Heart left ventricle (tissue), 16 donors: ENCODE measurements at regions of chr2 and their contacts with region 1.

Region 1: GRCh38 chr2:27271631-27272340 is 3.4 kb upstream of the DNAJC5G start:
- DNase-seq: peak in 3 of 5 donors; percentile 64 to 69 (median 66)
- ATAC-seq: peak; percentile 87 to 95 (median 93)
- H3K4me3 ChIP-seq: no peak overlapping the region
- H3K27ac ChIP-seq: peak overlapping the region; percentile 62 to 91 (median 77)
- H3K4me1 ChIP-seq: peaks cover 0 to 38% (median 5%) of the 10 kb centered on the region in 12 donors
- H3K27me3 ChIP-seq: peaks cover 0 to 11% (median 0%) of the 10 kb centered on the region in 9 donors
- CTCF ChIP-seq: no peak
- POLR2A ChIP-seq: peak in 1 of 2 donors; percentile 32

Region 2: GRCh38 chr2:26959331-26959730 is 312.5 kb before region 1 on chr2:
- intact Hi-C with region 1: loop called in 2 of 10 experiments (anchors 10 kb)
- DNase-seq: no peak
- ATAC-seq: peak in 1 of 4 donors; percentile 44
- H3K4me3 ChIP-seq: no peak overlapping the region
- H3K27ac ChIP-seq: no peak overlapping the region
- H3K4me1 ChIP-seq: peaks cover 0 to 7% (median 0%) of the 10 kb centered on the region in 12 donors
- H3K27me3 ChIP-seq: peaks cover 0 to 46% (median 7%) of the 10 kb centered on the region in 9 donors
- CTCF ChIP-seq: no peak
- POLR2A ChIP-seq: no peak

Region 3: DNA sequence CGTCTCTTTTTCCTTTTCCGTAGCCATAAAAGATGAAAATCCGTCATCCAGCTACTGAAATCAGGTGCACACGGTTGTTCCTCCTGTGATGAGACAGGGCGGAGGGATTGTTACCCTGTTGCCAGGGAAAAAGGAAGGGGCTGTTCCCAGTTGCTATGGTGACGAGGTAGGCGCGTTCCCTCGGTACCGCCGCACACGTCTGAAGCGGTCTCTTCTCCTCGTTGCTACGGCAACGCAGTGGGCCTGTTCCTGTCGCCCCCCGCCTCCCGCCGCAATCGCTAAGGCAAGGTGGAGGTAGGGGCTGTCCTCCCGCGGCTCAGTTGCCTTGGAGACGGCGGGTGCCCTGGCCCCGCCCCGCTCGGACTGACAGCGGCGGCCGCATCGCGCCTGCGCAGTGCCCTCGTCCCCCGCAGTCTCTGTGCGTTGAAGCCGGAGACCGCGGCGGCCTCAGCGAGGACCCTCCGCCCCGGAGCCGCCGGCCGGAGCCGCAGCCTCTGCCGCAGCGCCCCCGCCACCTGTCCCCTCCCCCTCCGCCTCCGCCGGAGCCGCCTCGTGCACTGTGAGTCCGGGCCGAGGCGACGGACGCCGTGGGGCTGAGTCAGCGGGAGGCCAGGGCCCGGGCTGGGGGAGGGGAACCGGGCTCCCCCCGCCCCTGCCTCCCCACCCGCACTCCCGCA is 301.4 kb before region 1 on chr2 and contains the start of gene MAPRE3:
- intact Hi-C with region 1: loop called in 1 of 10 experiments (anchors 10 kb)
- DNase-seq: peak; percentile 79 to 93 (median 84)
- ATAC-seq: peak; percentile 76 to 97 (median 93)
- H3K4me3 ChIP-seq: peak within 1 kb of the TSS; percentile 64 to 96 (median 84)
- H3K27ac ChIP-seq: peak within 1 kb of the TSS in 11 of 12 donors; percentile 58 to 86 (median 72)
- H3K4me1 ChIP-seq: peaks cover 0 to 33% (median 22%) of the 10 kb centered on the region in 12 donors
- H3K27me3 ChIP-seq: no peaks in the 10 kb centered on the region
- CTCF ChIP-seq: no peak
- POLR2A ChIP-seq: peak in 1 of 2 donors; percentile 34
- total RNA-seq, gene MAPRE3: 27.4 to 55.2 (median 42.3) TPM